ENCODE measurements at regions of chr15 and their contacts with region 1.

Region 1: GRCh38 chr15:98277602-98278001 is 317.1 kb downstream of the ARRDC4 start:
- DNase-seq: no peak
- ATAC-seq: no peak
- H3K4me3 Mint-ChIP-seq: no peak overlapping the region
- H3K27ac Mint-ChIP-seq: no peak overlapping the region
- H3K4me1 Mint-ChIP-seq: no peaks in the 10 kb centered on the region
- H3K27me3 Mint-ChIP-seq: peaks cover 17% of the 10 kb centered on the region

Region 2: GRCh38 chr15:98187549-98187948 is 90.1 kb before region 1 on chr15:
- CTCF ChIA-PET with region 1: no interaction called
- POLR2A ChIA-PET with region 1: no interaction called
- intact Hi-C with region 1: loop called in 1 of 2 experiments (anchors 5 kb)
- DNase-seq: no peak
- ATAC-seq: no peak
- H3K4me3 Mint-ChIP-seq: no peak overlapping the region
- H3K27ac Mint-ChIP-seq: no peak overlapping the region
- H3K4me1 Mint-ChIP-seq: no peaks in the 10 kb centered on the region
- H3K27me3 Mint-ChIP-seq: peaks cover 5% of the 10 kb centered on the region